Activated CD4-positive, alpha-beta T cell treated with anti-CD3 and anti-CD28 coated beads, Interleukin-2, amount 10 ng/mL, durations not matched to agents 7 days and 5 days (primary cell): ENCODE measurements at regions of chr20 and their contacts with region 1.

Region 1: GRCh38 chr20:48750947-48751635 is 76.7 kb downstream of the PREX1 start:
- DNase-seq: peak; percentile 56
- H3K4me3 Mint-ChIP-seq: peak overlapping the region; percentile 20
- H3K27ac Mint-ChIP-seq: peak overlapping the region; percentile 86
- H3K4me1 Mint-ChIP-seq: peaks cover 74% of the 10 kb centered on the region
- H3K27me3 Mint-ChIP-seq: no peaks in the 10 kb centered on the region

Region 2: DNA sequence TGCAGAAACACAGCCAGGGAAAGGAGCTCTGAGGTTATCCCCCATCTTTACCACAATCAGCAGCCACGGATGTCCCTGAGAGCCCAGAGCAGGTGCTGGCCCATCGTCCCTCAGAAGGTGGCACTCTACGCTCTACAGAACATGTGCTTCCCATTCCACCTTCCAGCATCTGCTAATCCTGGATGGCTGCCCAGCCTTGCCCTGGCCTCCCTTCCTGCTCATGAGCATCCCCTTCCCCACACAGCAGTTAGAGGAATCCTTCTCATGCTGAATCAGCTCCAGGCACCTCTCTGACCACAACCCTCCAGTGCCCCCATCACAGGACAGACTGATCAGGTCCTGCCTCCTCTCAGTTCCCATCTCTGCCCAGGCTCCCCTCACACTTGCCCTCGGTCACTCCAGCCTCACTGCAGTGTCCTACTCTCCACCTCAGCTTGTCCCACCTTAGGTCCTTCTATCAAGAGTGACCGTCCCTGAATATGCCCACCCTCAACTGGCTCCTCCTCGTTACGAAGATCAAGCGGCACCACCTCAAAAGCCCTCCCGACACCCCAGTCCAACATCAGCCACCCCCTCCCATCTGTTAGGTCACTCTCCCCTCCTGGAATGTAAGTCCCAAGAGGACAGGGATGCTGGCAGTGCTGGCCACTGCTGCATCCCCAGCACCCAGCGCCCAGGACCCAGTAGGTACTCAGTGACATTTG is 205.9 kb before region 1 on chr20:
- CTCF ChIA-PET with region 1: no interaction called
- POLR2A ChIA-PET with region 1: no interaction called
- DNase-seq: no peak
- H3K4me3 Mint-ChIP-seq: no peak overlapping the region
- H3K27ac Mint-ChIP-seq: no peak overlapping the region
- H3K4me1 Mint-ChIP-seq: no peaks in the 10 kb centered on the region
- H3K27me3 Mint-ChIP-seq: peaks cover 10% of the 10 kb centered on the region

Region 3: DNA sequence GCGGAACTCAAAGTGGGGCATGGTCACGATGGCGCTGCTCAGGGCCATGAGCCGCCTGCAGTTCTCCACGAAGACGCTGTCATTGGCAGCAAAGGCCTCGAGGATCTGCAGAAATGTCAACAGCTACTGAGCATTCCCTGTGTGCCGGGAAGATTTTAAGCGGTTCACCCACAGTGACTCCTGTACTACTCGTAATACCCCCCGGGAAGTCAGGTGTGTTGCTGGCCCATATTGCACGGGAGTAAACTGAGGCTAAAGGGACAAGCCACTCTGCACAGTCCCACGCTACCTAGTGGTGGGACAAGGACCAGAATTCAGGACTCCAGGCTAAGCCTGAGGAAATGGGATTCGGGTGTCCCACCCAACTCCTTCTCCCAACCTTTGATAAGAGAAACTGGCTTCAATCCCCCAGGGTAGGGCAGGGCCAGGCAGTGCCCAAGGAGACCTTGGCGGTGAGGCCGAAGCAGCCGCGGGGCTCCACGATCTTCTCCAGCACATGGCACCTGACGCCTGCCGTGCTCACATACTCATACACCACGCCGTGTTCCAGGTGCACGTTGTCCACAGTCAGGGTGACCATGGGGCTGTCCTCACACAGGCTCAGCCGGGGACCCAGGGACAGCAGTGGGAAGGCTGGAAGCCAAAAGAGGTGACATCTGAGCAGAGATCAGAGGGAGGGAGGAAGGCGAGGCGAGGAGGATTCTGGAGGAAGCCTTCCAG is 100.0 kb before region 1 on chr20:
- CTCF ChIA-PET with region 1: no interaction called
- POLR2A ChIA-PET with region 1: no interaction called
- DNase-seq: no peak
- H3K4me3 Mint-ChIP-seq: no peak overlapping the region
- H3K27ac Mint-ChIP-seq: no peak overlapping the region
- H3K4me1 Mint-ChIP-seq: no peaks in the 10 kb centered on the region
- H3K27me3 Mint-ChIP-seq: no peaks in the 10 kb centered on the region

Region 4: GRCh38 chr20:48738399-48739304 is 12.4 kb before region 1 on chr20:
- CTCF ChIA-PET with region 1: interaction called, 27 read pairs
- POLR2A ChIA-PET with region 1: no interaction called
- DNase-seq: peak; percentile 69
- H3K4me3 Mint-ChIP-seq: peak overlapping the region; percentile 4
- H3K27ac Mint-ChIP-seq: peak overlapping the region; percentile 87
- H3K4me1 Mint-ChIP-seq: peaks cover 66% of the 10 kb centered on the region
- H3K27me3 Mint-ChIP-seq: no peaks in the 10 kb centered on the region